ENCODE measurements at regions of chr17 and their contacts with region 1.

Region 1: DNA sequence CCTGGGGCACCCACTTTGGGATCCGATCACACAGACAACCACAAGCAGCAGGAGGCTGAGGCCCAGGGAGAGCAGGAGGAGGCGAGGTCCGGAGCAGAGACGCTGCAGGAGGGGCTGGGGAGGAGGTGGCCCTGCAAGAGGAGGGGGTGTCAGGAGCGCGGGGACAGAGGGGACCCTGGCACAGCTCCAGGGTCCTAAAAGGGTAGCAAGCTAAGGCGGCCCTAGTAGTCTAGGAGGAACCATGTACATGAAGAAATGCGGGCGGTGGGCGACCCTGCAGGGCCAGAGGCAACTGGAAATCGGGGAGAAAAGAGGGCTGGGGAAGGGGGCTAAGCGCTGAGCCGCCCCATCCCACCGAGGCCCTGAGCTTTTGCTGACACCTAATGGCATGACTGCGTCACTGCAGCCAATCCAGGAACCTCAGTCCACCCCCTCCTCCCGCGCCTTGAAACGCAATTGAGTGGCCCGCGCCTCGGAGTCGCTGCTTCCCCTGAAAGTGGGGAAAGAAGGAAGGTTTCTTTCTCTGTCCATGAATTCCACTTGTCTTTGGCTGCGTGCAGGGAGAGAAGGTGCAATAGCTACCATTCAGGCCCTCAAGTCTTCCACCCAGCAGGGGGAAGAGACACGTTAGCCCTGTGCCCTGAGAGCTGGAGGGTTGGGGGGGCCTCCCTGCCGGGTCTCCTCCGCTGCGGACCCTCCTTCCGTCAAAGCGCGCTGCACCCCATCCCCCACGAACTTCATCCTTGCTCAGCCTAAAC is 1.8 kb downstream of the ASGR1 start:
- DNase-seq: no peak
- H3K4me3 ChIP-seq: peak overlapping the region; percentile 60
- CTCF ChIP-seq: peak; percentile 86

Region 2: GRCh38 chr17:7023576-7024401 is 153.6 kb before region 1 on chr17:
- CTCF ChIA-PET with region 1: no interaction called
- POLR2A ChIA-PET with region 1: no interaction called
- DNase-seq: no peak
- H3K4me3 ChIP-seq: peak overlapping the region; percentile 12; the same call in 1 of the 2 replicates
- CTCF ChIP-seq: no peak

Region 3: DNA sequence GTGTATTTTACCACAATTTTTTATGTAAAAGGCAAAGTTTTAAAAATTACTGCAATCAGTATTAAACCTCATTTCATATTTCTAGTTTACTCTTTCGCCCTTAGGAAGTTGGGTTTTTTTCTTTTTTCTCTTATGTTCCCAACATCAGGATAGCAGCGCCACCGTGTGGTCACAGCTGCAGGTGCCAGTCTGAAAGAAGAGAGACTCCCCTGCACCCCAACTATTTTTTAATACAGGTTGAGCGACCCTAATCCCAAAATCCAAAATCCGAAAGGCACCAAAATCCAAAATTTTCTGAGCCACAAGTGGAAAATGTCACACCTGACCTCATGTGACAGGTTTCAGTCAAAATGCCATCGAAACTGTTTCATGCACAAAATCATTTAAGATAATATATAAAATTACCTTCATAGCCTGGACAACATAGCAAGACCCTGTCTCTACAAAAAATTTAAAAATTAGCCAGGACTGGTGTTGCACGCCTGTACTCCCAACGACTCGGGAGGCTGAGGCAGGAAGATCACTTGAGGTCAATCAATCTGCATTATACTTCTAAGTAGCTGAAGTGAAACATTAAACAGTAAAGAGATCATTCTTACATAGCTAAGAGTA is 41.0 kb before region 1 on chr17:
- CTCF ChIA-PET with region 1: interaction called, 15 read pairs
- POLR2A ChIA-PET with region 1: no interaction called
- DNase-seq: peak; percentile 4
- H3K4me3 ChIP-seq: no peak overlapping the region
- CTCF ChIP-seq: peak; percentile 72

Region 4: DNA sequence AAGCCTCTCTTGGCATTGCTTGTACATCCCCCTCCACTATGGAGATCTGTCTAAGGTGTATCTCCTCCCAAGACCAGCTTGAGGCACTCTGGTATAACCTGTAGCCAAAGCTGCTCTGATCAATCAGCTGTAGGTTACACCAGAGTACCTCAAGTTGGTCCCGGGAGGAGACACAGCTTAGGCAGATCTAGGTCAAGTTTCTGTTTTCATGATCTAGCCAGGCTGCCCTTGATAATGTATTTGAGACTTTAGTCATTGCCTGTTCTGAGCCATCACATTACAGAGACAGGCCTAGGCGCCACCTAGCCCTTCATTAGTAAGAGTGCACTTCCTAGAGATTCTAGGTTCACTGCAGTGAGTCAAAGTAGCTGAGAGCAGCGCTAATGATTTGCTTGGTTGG is 29.6 kb before region 1 on chr17:
- CTCF ChIA-PET with region 1: interaction called, 11 read pairs
- POLR2A ChIA-PET with region 1: no interaction called
- DNase-seq: no peak
- H3K4me3 ChIP-seq: no peak overlapping the region
- CTCF ChIP-seq: no peak

Region 5: DNA sequence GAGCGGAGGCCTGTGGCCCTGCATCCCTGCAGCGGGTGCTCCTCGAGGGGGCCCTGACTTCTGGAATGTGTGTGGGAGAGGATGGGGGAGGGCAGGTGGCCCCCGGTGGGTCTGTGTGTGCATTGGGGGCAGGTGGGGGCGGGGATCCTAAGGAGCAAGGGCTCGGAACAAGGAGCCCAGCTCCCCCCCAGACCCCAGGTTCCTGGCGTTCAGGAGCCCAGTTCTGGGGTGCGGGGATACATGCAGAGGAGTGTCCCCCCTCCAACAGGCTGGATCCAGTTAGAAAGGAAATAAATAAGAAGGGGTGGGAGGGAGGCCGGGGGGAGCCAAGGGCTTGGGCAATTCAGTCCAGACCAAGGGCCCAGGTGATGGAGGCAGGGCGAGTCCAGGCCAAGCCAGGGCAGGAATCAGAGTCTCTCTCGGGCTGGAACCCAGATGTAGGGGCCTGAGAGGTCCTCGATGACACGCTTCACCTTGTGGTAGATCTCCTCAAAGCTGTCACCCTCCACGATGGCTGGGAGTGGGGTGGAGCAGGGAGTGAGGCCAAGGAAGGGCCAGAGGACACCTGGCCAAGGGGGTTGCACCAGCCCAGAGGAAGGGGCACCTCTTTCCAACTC is 13.0 kb after region 1 on chr17:
- CTCF ChIA-PET with region 1: interaction called, 35 read pairs
- POLR2A ChIA-PET with region 1: no interaction called
- DNase-seq: no peak
- H3K4me3 ChIP-seq: no peak overlapping the region
- CTCF ChIP-seq: no peak

Region 6: DNA sequence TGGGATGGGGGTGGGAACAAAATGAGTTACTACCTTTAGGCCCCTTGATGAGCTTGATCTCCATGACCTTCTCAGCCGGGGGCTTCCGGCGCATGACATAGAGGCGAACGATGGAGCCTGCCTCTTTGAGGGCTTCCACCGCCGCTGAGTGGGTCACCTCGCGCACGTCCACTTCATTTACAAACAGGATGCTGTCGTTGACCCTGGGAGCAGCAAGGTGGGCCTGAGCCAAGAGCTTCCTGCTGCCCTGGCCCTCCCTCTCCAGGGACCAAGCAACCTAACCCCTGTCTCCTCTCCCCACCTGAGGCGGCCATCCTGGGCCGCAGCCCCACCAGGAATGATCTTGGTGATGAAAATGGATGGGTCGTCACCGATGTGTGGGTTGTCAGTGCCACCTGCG is 26.0 kb after region 1 on chr17:
- CTCF ChIA-PET with region 1: interaction called, 11 read pairs
- POLR2A ChIA-PET with region 1: no interaction called
- DNase-seq: no peak
- H3K4me3 ChIP-seq: no peak overlapping the region
- CTCF ChIP-seq: no peak